GM10248 (cell line): ENCODE measurements at regions of chr3 and their contacts with region 1.

Region 1: DNA sequence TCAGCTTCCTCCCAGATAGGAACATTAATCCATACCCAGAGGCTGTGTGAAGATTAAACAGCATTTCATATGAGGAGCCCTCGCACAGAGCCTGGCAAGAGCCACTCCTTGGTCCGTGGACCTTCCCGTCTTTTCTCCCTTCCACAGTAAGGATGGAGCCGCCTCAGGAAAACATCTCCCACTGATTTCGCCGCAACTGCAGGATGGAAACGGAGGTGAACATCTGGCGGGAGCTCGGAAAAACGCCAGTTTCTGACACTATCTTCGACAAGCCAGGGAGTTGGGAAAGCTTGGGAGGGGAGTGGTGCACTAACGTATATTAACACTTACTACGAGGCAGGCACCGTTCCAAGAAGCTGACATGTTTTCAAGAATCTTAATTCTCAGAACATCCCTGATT is 157.9 kb downstream of the XXYLT1 start:
- DNase-seq: no peak
- CTCF ChIP-seq: no peak

Region 2: DNA sequence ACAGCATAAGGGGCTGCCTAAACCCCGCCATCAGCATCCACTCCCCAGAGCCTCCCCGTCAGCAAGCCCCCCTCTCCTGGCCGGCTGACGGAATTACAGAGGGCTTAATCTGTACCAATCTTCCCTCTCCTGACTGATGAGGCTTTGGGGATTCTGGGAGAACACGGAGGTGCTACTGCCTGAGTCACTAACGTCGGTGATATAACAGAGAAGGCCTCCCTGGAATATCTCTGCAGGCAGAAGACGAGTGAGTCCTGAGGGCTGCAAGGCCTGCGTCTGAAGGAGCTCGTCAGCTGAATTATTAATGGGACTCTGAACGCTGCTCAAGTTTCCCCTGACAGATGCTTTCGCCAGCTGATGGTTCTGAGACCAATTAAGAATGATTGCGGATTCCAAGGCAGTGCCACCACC is 10.2 kb after region 1 on chr3:
- CTCF ChIA-PET with region 1: interaction called, 78 read pairs
- POLR2A ChIA-PET with region 1: no interaction called
- DNase-seq: no peak
- CTCF ChIP-seq: no peak